H1 (cell line): ENCODE measurements at regions of chr18 and their contacts with region 1.

Region 1: GRCh38 chr18:961644-962355 is 57.1 kb downstream of the ADCYAP1 start:
- DNase-seq: peak; percentile 33 to 85
- H3K4me3 ChIP-seq: peak overlapping the region in 2 of 4 experiments; percentile 23 to 47; a peak in 4 of 8 replicates
- H3K27ac ChIP-seq: no peak overlapping the region
- H3K4me1 ChIP-seq: peaks cover 0 to 2% (median under 1%) of the 10 kb centered on the region in 4 experiments; a peak in 2 of 7 replicates
- H3K27me3 ChIP-seq: no peaks in the 10 kb centered on the region
- CTCF ChIP-seq: peak; percentile 36 to 69 (median 64)
- EP300 ChIP-seq: no peak
- POLR2A ChIP-seq: no peak
- RAD21 ChIP-seq: peak; percentile 55 to 65

Region 2: GRCh38 chr18:941331-941730 is 20.5 kb before region 1 on chr18:
- CTCF ChIA-PET with region 1: interaction called, 19 read pairs
- POLR2A ChIA-PET with region 1: interaction called, 9 read pairs
- DNase-seq: no peak
- H3K4me3 ChIP-seq: no peak overlapping the region
- H3K27ac ChIP-seq: no peak overlapping the region
- H3K4me1 ChIP-seq: 0 out of 7 replicates have a peak, but pooled peaks cover 0 to 2% (median 0%) of the 10 kb centered on the region in 4 experiments
- H3K27me3 ChIP-seq: no peaks in the 10 kb centered on the region; a peak in 1 of 7 replicates
- CTCF ChIP-seq: no peak
- EP300 ChIP-seq: no peak
- POLR2A ChIP-seq: no peak
- RAD21 ChIP-seq: no peak

Region 3: GRCh38 chr18:950882-951539 is 10.8 kb before region 1 on chr18:
- CTCF ChIA-PET with region 1: interaction called, 12 read pairs
- POLR2A ChIA-PET with region 1: no interaction called
- DNase-seq: no peak
- H3K4me3 ChIP-seq: no peak overlapping the region
- H3K27ac ChIP-seq: no peak overlapping the region
- H3K4me1 ChIP-seq: peaks cover 0 to 5% (median 0%) of the 10 kb centered on the region in 4 experiments; a peak in 1 of 7 replicates
- H3K27me3 ChIP-seq: no peaks in the 10 kb centered on the region
- CTCF ChIP-seq: no peak
- EP300 ChIP-seq: no peak
- POLR2A ChIP-seq: no peak
- RAD21 ChIP-seq: no peak